Dorsolateral prefrontal cortex (tissue), 120 donors: ENCODE measurements at regions of chr1 and their contacts with region 1.

Region 1: DNA sequence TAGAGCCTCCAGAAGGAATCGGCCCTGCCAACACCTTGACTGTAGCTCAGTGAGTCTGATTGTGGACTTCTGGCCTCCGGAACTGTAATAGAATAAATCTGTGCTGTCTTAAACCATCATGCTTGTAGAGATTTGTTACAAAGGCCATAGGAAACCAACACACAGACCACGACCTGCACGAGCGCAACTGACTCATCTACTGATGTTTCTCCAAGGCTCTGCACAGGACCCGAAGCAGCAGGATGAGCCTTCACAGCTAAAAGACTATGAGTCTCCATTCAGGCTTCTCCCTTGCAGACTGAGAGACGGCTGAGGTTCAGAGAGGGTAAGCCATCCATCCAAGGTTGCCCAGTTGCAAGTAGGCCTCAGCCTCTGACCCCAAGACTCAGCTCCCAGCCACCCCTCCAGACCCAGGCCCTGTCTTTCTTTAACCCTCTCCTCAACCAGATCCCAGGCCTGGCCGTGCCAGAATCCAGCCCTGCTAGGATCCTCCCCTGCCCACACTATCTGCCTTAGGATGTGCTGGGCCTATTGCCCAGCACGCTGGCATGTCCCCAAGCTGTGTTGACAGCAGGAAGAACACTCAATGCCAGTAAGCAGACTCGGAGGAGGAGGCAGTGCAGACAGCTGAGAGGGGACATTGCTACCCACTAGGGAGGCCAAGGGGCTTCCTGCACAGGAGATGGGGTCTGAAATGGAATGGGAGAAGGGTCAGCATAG is 109.0 kb downstream of the HMGB4 start:
- DNase-seq: peak; percentile 71 to 89 (median 86)
- H3K4me3 ChIP-seq: peak overlapping the region in 7 of 59 donors; percentile 1 to 33 (median 27)
- H3K27ac ChIP-seq: peak overlapping the region in 58 of 59 donors; percentile 7 to 90 (median 74)
- H3K27me3 ChIP-seq: no peaks in the 10 kb centered on the region
- CTCF ChIP-seq: peak in 1 of 56 donors; percentile 11

Region 2: DNA sequence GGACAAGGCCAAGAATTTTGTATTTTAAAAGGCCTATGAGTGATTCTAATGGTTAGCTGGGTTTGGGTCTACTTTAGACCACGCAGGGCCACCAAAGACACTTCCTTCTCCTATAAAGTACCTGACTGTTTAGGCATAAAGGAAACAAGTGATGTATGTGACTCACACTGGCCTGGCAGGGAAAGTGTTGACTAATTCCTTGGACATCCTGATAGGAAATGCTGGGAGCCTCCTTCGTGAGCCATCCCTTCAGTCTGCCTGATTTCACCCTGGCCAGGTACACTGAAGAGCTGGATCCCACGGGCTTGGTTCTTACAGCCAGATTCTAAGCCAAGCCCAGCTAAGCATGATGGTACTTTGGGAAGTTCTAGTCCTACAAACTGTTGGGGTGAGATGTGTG is 209.4 kb before region 1 on chr1:
- intact Hi-C with region 1: loop called in 1 of 2 experiments (anchors 5 kb)
- DNase-seq: no peak
- H3K4me3 ChIP-seq: no peak overlapping the region
- H3K27ac ChIP-seq: peak overlapping the region in 7 of 59 donors; percentile 2 to 43 (median 5)
- H3K27me3 ChIP-seq: no peaks in the 10 kb centered on the region
- CTCF ChIP-seq: no peak

Region 3: DNA sequence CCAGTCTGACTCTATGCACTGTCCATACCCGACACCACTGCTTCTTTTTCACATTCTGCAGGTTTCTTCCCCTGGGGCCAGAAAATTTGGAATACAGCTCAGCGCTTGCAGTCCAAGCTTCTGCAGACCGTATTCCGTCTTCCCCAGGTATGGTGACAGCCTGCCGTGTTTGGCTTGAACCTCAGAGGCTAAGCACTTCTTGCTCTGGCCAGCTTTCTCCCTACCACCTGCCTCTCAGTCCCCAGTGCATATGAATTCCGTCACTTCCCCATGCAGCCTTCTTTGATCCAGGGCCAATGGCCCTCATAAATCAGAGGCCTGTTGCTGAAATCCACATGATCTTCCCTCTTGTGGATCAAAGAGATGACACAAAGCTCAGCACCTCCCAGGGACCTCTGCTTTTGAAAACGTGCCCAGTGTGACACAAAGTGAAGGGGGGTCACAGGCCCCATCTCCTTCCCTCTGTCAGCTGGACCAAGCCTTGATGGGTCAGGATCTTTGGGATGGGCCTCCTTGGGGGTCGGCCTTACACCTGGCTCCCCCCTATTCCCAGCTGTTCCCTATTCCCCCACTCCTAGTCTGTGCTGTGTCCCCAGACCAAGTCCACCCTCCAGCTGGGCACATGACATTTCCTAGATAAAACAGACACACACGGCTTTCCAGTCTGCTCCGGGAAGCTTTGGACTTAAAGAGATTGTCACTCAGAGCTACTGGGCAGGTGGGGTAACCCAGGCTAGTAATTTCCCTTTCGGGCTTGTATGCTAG is 42.3 kb before region 1 on chr1:
- intact Hi-C with region 1: loop called in 1 of 2 experiments (anchors 5 kb)
- DNase-seq: peak in 1 of 10 donors; percentile 23
- H3K4me3 ChIP-seq: no peak overlapping the region
- H3K27ac ChIP-seq: no peak overlapping the region
- H3K27me3 ChIP-seq: no peaks in the 10 kb centered on the region
- CTCF ChIP-seq: no peak

Region 4: GRCh38 chr1:34060901-34061415 is 88.1 kb after region 1 on chr1:
- intact Hi-C with region 1: loop called (anchors 5 kb)
- DNase-seq: peak in 4 of 10 donors; percentile 7 to 43 (median 32)
- H3K4me3 ChIP-seq: peak overlapping the region in 2 of 59 donors; percentile 1 to 12
- H3K27ac ChIP-seq: peak overlapping the region in 54 of 59 donors; percentile 1 to 82 (median 70)
- H3K27me3 ChIP-seq: no peaks in the 10 kb centered on the region
- CTCF ChIP-seq: peak in 2 of 56 donors; percentile 13 to 14